Naive thymus-derived CD4-positive, alpha-beta T cell (primary cell): ENCODE measurements at regions of chr7 and their contacts with region 1.

Region 1: GRCh38 chr7:33932832-33933468 is 27.6 kb downstream of the BMPER start:
- DNase-seq: peak; percentile 2 to 53 (median 39)
- ATAC-seq: peak; percentile 63
- H3K4me3 ChIP-seq: no peak overlapping the region
- H3K4me3 Mint-ChIP-seq: no peak overlapping the region
- H3K27ac ChIP-seq: no peak overlapping the region
- H3K27ac Mint-ChIP-seq: no peak overlapping the region
- H3K4me1 ChIP-seq: no peaks in the 10 kb centered on the region
- H3K4me1 Mint-ChIP-seq: peaks cover 0 to 6% (median 0%) of the 10 kb centered on the region in 7 donors
- H3K27me3 ChIP-seq: no peaks in the 10 kb centered on the region
- H3K27me3 Mint-ChIP-seq: peaks cover 5 to 20% (median 12%) of the 10 kb centered on the region in 5 donors

Region 2: GRCh38 chr7:32694182-32694581 is 1238.8 kb before region 1 on chr7:
- CTCF ChIA-PET with region 1: no interaction called
- POLR2A ChIA-PET with region 1: no interaction called
- intact Hi-C with region 1: loop called in 1 of 2 experiments (anchors 10 kb)
- DNase-seq: no peak
- ATAC-seq: no peak
- H3K4me3 ChIP-seq: no peak overlapping the region
- H3K4me3 Mint-ChIP-seq: no peak overlapping the region
- H3K27ac ChIP-seq: no peak overlapping the region
- H3K27ac Mint-ChIP-seq: no peak overlapping the region
- H3K4me1 ChIP-seq: no peaks in the 10 kb centered on the region
- H3K4me1 Mint-ChIP-seq: peaks cover under 1 to 11% (median 6%) of the 10 kb centered on the region in 7 donors
- H3K27me3 ChIP-seq: no peaks in the 10 kb centered on the region
- H3K27me3 Mint-ChIP-seq: peaks cover 0 to 10% (median 0%) of the 10 kb centered on the region in 5 donors

Region 3: DNA sequence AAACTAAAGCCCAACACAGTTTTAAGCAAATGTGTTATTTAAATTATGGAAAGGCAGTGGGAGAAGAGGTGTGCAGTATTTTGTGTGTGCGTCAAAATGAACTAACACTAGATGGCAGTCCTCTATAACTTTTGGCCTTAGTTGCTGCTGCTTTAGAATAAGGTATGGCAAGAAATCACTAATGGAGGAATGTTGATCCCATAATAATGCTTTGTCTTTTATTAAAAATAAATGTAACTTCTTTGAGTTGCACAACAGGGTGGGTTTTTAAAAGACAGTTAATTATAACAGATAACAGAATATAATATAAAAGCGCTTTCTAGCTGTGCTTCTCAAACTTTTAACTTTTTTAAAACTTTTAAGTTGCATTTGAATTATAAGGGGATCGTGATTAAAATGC is 747.2 kb before region 1 on chr7:
- CTCF ChIA-PET with region 1: interaction called, 9 read pairs
- POLR2A ChIA-PET with region 1: no interaction called
- intact Hi-C with region 1: loop called (anchors 1 kb)
- DNase-seq: peak in 5 of 9 donors; percentile 22 to 40 (median 33)
- ATAC-seq: peak; percentile 61
- H3K4me3 ChIP-seq: no peak overlapping the region
- H3K4me3 Mint-ChIP-seq: no peak overlapping the region
- H3K27ac ChIP-seq: no peak overlapping the region
- H3K27ac Mint-ChIP-seq: no peak overlapping the region
- H3K4me1 ChIP-seq: peaks cover 0 to 2% of the 10 kb centered on the region in 2 donors
- H3K4me1 Mint-ChIP-seq: peaks cover 3 to 12% (median 7%) of the 10 kb centered on the region in 7 donors
- H3K27me3 ChIP-seq: no peaks in the 10 kb centered on the region
- H3K27me3 Mint-ChIP-seq: no peaks in the 10 kb centered on the region

Region 4: GRCh38 chr7:33243319-33243881 is 689.5 kb before region 1 on chr7:
- CTCF ChIA-PET with region 1: no interaction called
- POLR2A ChIA-PET with region 1: no interaction called
- intact Hi-C with region 1: loop called (anchors 1 kb)
- DNase-seq: peak in 1 of 9 donors; percentile 3
- ATAC-seq: no peak
- H3K4me3 ChIP-seq: no peak overlapping the region
- H3K4me3 Mint-ChIP-seq: no peak overlapping the region
- H3K27ac ChIP-seq: no peak overlapping the region
- H3K27ac Mint-ChIP-seq: no peak overlapping the region
- H3K4me1 ChIP-seq: no peaks in the 10 kb centered on the region
- H3K4me1 Mint-ChIP-seq: peaks cover 0 to 7% (median 0%) of the 10 kb centered on the region in 7 donors
- H3K27me3 ChIP-seq: no peaks in the 10 kb centered on the region
- H3K27me3 Mint-ChIP-seq: no peaks in the 10 kb centered on the region

Region 5: DNA sequence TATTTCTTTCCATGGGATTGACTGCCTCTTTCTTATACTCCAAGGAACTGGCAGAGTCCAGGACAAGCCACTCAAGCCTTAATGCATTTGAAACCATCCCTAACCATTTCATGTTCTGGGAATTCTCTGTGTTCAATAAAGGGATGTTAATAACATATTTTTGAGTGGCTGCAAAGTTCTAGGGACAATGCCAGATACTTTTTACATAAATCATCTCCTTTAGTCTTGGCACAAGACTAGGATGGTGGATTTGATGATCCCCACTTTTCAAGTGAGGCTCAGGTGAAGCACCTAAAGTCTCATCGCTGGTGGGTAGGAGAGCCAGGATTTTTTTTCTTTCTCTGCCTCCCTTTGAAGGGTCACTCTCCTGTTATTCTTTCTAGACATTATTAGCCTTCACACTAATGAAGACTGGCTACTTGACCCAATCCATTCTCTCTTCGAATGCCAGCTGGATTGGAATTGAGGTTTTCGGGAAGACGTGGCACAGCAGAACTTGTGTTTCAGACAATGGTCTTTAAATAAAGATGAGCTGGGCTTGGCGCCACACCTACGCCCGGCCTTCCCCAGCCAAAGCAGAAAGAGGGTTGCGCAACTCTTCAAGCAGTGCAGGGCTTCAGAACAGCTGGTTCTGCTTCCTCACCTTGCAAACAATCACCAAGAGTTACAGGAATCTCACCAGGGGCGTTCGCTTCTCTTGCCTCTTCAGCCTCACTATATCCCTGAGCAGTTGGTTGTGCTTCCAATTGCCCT is 101.4 kb before region 1 on chr7:
- CTCF ChIA-PET with region 1: no interaction called
- POLR2A ChIA-PET with region 1: no interaction called
- intact Hi-C with region 1: no loop called
- DNase-seq: no peak
- ATAC-seq: no peak
- H3K4me3 ChIP-seq: no peak overlapping the region
- H3K4me3 Mint-ChIP-seq: no peak overlapping the region
- H3K27ac ChIP-seq: no peak overlapping the region
- H3K27ac Mint-ChIP-seq: no peak overlapping the region
- H3K4me1 ChIP-seq: no peaks in the 10 kb centered on the region
- H3K4me1 Mint-ChIP-seq: no peaks in the 10 kb centered on the region
- H3K27me3 ChIP-seq: no peaks in the 10 kb centered on the region
- H3K27me3 Mint-ChIP-seq: peaks cover 0 to 3% (median 0%) of the 10 kb centered on the region in 5 donors

Region 6: GRCh38 chr7:33979807-33980355 is 46.9 kb after region 1 on chr7:
- CTCF ChIA-PET with region 1: no interaction called
- POLR2A ChIA-PET with region 1: no interaction called
- intact Hi-C with region 1: no loop called
- DNase-seq: no peak
- ATAC-seq: no peak
- H3K4me3 ChIP-seq: no peak overlapping the region
- H3K4me3 Mint-ChIP-seq: no peak overlapping the region
- H3K27ac ChIP-seq: no peak overlapping the region
- H3K27ac Mint-ChIP-seq: no peak overlapping the region
- H3K4me1 ChIP-seq: no peaks in the 10 kb centered on the region
- H3K4me1 Mint-ChIP-seq: no peaks in the 10 kb centered on the region
- H3K27me3 ChIP-seq: no peaks in the 10 kb centered on the region
- H3K27me3 Mint-ChIP-seq: peaks cover 0 to 10% (median 0%) of the 10 kb centered on the region in 5 donors

Region 7: GRCh38 chr7:34143402-34143801 is 210.5 kb after region 1 on chr7:
- CTCF ChIA-PET with region 1: no interaction called
- POLR2A ChIA-PET with region 1: no interaction called
- intact Hi-C with region 1: no loop called
- DNase-seq: no peak
- ATAC-seq: no peak
- H3K4me3 ChIP-seq: no peak overlapping the region
- H3K4me3 Mint-ChIP-seq: no peak overlapping the region
- H3K27ac ChIP-seq: no peak overlapping the region
- H3K27ac Mint-ChIP-seq: no peak overlapping the region
- H3K4me1 ChIP-seq: no peaks in the 10 kb centered on the region
- H3K4me1 Mint-ChIP-seq: no peaks in the 10 kb centered on the region
- H3K27me3 ChIP-seq: no peaks in the 10 kb centered on the region
- H3K27me3 Mint-ChIP-seq: no peaks in the 10 kb centered on the region

Region 8: DNA sequence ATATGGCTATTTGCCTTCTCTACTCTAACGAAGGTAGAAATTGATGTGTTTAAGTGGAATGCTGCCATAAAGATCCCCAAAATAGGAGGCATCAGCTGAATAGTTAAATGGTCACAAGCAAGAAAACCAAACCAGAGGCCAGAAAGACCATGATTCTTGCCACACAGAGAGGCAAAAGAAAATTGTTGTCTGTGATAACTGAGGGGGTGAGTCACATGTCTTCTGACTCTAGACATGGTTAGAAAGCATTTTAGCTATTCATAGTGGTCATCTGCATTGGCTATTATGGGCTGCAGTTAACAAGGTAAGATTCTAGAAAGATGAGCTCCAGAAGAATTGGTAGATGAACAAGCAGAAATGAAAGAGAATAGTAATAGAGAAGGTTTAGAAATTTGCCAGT is 363.7 kb after region 1 on chr7:
- CTCF ChIA-PET with region 1: no interaction called
- POLR2A ChIA-PET with region 1: no interaction called
- intact Hi-C with region 1: no loop called
- DNase-seq: no peak
- ATAC-seq: no peak
- H3K4me3 ChIP-seq: no peak overlapping the region
- H3K4me3 Mint-ChIP-seq: no peak overlapping the region
- H3K27ac ChIP-seq: no peak overlapping the region
- H3K27ac Mint-ChIP-seq: no peak overlapping the region
- H3K4me1 ChIP-seq: no peaks in the 10 kb centered on the region
- H3K4me1 Mint-ChIP-seq: no peaks in the 10 kb centered on the region
- H3K27me3 ChIP-seq: no peaks in the 10 kb centered on the region
- H3K27me3 Mint-ChIP-seq: peaks cover 0 to 4% (median 0%) of the 10 kb centered on the region in 5 donors